Pancreas (tissue), 10 donors: ENCODE measurements at regions of chr2 and their contacts with region 1.

Region 1: GRCh38 chr2:118861731-118862130 is 14.3 kb upstream of the EN1 start:
- DNase-seq: no peak
- ATAC-seq: no peak
- H3K4me3 ChIP-seq: no peak overlapping the region
- H3K27ac ChIP-seq: no peak overlapping the region
- H3K4me1 ChIP-seq: no peaks in the 10 kb centered on the region
- H3K27me3 ChIP-seq: peaks cover 0 to 33% (median 4%) of the 10 kb centered on the region in 4 donors
- CTCF ChIP-seq: no peak

Region 2: DNA sequence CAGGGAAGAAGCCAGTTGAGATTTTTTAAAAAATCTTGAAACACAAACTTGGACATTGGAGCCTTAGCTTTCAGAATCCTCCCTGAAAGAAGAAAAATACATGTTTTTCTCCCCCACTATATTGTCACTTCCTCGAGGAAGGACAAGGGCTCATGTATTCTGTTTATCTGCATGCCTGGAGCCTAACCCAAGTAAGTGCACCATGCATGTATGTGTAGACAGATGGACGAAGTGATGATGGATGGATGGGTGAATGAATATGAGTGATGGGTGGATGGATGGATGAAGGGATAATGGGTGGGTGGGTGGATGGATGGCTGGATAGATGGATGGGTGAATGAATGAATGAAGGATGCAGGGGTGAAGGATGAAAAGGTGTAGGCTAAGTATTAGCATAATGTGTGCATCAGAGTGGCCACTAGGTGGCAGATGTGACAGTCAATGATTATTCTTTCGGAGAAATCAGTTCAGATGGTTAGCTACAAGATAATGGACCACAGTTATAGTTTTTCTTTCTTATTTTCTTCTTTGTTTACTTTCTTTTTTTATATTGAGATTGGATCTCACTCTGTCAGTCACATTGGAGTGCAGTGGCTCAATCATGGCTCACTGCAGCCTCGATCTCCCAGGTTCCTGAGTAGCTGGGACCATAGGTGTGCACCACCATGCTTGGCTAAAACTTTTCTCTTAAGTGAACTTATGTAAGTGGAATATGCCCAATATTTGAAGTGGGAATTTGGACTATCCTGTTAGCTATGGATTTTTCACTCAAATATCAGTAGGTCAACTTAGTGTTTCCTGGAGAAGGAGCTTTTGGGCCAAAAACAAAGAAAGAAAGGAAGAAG is 829.3 kb before region 1 on chr2:
- intact Hi-C with region 1: loop called in 1 of 3 experiments (anchors 5 kb)
- DNase-seq: peak in 4 of 6 donors; percentile 18 to 48 (median 27)
- ATAC-seq: peak; percentile 40 to 85 (median 80)
- H3K4me3 ChIP-seq: no peak overlapping the region
- H3K27ac ChIP-seq: no peak overlapping the region
- H3K4me1 ChIP-seq: no peaks in the 10 kb centered on the region
- H3K27me3 ChIP-seq: peaks cover 0 to 3% (median 0%) of the 10 kb centered on the region in 4 donors
- CTCF ChIP-seq: peak; percentile 60 to 86 (median 74)